PC-3 (cell line): ENCODE measurements at regions of chr18 and their contacts with region 1.

Region 1: DNA sequence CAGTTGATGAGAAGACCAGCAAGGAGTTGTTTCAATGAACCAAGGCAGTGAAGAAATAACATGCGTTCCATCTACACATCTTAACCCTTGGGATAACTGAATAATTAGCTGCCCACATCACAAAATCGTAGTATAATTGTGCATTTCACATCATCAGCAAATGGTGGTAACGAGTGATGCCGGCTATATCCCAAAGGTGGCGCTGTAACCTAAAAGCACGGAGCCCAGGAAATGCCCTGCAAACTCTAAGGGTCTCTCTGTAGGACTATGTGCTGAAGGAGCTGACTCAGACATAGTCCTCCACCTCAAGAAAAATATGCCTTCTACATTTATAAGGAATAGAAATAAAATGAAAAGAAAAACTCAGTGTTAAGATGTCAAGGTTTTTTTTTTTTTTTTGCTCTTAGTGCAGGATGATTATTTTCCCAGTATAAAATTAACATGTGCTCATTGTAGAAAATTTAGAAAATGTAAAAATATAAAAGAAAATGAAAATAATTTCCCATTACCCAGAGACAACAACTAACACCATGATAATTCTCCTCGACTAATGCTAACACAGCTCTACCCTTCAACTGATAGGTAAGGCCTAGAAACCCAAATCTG is 23.1 kb upstream of the DSG3 start:
- DNase-seq: peak; percentile 46
- ATAC-seq: peak; percentile 59
- H3K4me3 ChIP-seq: no peak overlapping the region
- H3K27ac ChIP-seq: no peak overlapping the region
- H3K4me1 ChIP-seq: peaks cover 4% of the 10 kb centered on the region; the same call in 1 of the 2 replicates
- H3K27me3 ChIP-seq: no peaks in the 10 kb centered on the region
- CTCF ChIP-seq: peak; percentile 76

Region 2: DNA sequence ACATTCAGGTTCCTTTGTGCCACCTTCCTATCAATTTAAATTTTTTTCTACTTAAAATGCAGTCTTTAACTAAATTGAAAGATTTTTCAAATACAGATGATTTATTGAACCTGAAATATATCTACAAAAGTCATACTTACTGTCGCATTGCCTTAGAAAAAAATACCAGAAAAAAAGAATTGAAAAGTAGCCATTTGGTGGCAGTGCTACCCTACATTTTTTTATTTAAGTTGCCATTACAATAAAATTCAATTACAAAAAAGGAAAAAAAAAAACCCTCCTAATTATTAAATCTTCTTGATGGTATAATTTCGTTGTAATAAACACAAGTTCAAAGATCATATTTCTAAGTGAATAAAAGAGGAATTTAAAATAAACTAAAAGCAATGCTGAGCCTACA is 425.3 kb before region 1 on chr18:
- CTCF ChIA-PET with region 1: no interaction called
- POLR2A ChIA-PET with region 1: no interaction called
- intact Hi-C with region 1: loop called (anchors 5 kb)
- DNase-seq: peak; percentile 36
- ATAC-seq: no peak
- H3K4me3 ChIP-seq: no peak overlapping the region
- H3K27ac ChIP-seq: no peak overlapping the region
- H3K4me1 ChIP-seq: no peaks in the 10 kb centered on the region
- H3K27me3 ChIP-seq: no peaks in the 10 kb centered on the region
- CTCF ChIP-seq: peak; percentile 55

Region 3: DNA sequence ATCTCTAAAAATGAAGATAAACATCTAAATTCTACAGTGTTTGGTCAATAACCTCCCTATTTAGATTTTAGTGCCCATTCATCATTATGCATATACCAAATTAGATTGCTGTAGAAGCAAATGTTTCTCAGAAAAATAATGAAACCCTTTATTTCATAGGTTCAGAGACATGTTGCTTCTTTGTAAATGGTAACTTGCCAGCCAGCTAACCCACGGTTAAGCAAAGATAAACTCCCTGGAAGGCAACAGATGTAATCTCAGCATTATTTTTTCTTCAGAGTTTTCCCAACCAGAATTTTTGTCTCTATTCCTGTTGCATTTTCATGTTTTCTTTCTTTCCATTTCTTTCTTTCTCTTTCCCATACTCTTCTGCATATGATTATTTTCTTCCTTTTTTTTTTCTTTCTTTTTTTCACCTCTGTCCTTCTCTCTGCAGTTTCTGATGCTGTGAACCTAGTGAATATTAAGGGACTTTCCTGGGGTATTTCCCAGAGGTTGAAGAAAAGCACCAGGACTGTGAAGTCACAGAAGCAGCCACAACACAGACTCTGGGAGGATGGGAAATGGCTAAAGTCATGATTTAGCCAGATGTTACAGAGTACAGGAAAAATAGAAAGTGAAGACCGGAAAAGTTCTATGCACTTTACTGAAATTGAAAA is 156.5 kb before region 1 on chr18:
- CTCF ChIA-PET with region 1: no interaction called
- POLR2A ChIA-PET with region 1: no interaction called
- intact Hi-C with region 1: loop called (anchors 5 kb)
- DNase-seq: no peak
- ATAC-seq: no peak
- H3K4me3 ChIP-seq: no peak overlapping the region
- H3K27ac ChIP-seq: no peak overlapping the region
- H3K4me1 ChIP-seq: peaks cover 4% of the 10 kb centered on the region; the same call in 1 of the 2 replicates
- H3K27me3 ChIP-seq: no peaks in the 10 kb centered on the region
- CTCF ChIP-seq: no peak

Region 4: DNA sequence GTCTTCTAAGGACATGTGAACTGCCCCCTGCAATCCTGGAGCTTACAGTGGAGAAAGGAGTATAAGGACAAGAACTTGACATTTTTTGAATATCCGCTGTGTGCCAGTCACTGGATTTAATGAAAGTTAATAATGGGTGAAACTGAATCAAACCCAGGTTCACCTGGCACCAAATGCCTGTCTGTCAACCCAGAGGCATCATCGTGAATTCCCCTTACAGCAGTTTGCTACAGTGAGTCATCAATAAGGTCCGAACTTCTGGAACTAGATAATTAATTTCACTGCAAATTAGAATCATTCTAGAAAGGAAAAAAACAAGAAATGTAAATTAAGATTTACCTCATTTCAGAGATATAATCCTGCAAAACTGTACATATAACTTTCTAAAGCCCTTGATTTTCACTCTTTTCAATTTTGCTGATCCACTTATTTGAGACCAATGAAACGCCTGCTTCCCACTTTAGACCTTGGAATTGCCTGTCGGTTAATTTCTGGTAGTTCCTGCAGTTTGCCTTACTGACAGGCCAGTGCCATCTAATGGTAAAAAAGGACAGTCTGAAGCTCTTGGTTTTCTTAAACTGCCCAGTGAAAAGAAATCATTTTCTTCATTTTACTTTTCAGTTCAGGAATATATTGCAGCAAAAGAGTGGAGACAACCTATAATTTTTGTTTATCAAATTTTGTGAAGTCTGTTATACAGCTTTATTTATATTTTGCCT is 81.7 kb after region 1 on chr18:
- CTCF ChIA-PET with region 1: no interaction called
- POLR2A ChIA-PET with region 1: no interaction called
- intact Hi-C with region 1: loop called (anchors 1 kb)
- DNase-seq: peak; percentile 24
- ATAC-seq: peak; percentile 53
- H3K4me3 ChIP-seq: no peak overlapping the region
- H3K27ac ChIP-seq: no peak overlapping the region
- H3K4me1 ChIP-seq: peaks cover 18% of the 10 kb centered on the region
- H3K27me3 ChIP-seq: no peaks in the 10 kb centered on the region
- CTCF ChIP-seq: peak; percentile 53

Region 5: GRCh38 chr18:31555971-31556747 is 131.7 kb after region 1 on chr18:
- CTCF ChIA-PET with region 1: no interaction called
- POLR2A ChIA-PET with region 1: no interaction called
- intact Hi-C with region 1: loop called (anchors 1 kb)
- DNase-seq: peak; percentile 64
- ATAC-seq: peak; percentile 64
- H3K4me3 ChIP-seq: no peak overlapping the region; the same call in 1 of the 2 replicates
- H3K27ac ChIP-seq: no peak overlapping the region
- H3K4me1 ChIP-seq: peaks cover 7% of the 10 kb centered on the region; the same call in 1 of the 2 replicates
- H3K27me3 ChIP-seq: no peaks in the 10 kb centered on the region
- CTCF ChIP-seq: peak; percentile 65